ENCODE measurements at regions of chr5 and their contacts with region 1.

Region 1: GRCh38 chr5:151051066-151051930 is 29.5 kb downstream of the TNIP1 start:
- DNase-seq: peak; percentile 43
- H3K4me3 ChIP-seq: no peak overlapping the region
- H3K27ac ChIP-seq: no peak overlapping the region
- H3K27me3 ChIP-seq: no peaks in the 10 kb centered on the region
- CTCF ChIP-seq: peak; percentile 95

Region 2: DNA sequence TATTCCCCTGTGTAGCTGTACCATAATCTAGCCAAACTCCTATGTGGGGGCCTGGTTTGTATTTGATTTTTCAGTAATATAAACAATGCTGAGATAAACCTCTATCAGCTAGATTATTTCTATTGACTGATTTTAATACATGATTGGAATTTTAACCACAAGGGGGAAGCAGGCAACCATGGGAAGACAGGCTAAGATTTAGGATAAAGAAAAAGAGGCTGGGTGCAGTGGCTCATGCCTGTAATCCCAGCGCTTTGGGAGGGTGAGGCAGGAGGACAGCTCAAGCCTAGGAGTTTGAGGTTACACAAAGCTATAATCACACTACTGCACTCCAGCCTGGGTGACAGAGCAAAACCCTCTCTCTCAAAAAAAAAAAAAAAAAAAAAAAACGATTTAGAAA is 49.0 kb before region 1 on chr5:
- CTCF ChIA-PET with region 1: interaction called, 122 read pairs
- POLR2A ChIA-PET with region 1: no interaction called
- DNase-seq: no peak
- H3K4me3 ChIP-seq: no peak overlapping the region
- H3K27ac ChIP-seq: no peak overlapping the region
- H3K27me3 ChIP-seq: peaks cover 9% of the 10 kb centered on the region
- CTCF ChIP-seq: peak; percentile 59

Region 3: DNA sequence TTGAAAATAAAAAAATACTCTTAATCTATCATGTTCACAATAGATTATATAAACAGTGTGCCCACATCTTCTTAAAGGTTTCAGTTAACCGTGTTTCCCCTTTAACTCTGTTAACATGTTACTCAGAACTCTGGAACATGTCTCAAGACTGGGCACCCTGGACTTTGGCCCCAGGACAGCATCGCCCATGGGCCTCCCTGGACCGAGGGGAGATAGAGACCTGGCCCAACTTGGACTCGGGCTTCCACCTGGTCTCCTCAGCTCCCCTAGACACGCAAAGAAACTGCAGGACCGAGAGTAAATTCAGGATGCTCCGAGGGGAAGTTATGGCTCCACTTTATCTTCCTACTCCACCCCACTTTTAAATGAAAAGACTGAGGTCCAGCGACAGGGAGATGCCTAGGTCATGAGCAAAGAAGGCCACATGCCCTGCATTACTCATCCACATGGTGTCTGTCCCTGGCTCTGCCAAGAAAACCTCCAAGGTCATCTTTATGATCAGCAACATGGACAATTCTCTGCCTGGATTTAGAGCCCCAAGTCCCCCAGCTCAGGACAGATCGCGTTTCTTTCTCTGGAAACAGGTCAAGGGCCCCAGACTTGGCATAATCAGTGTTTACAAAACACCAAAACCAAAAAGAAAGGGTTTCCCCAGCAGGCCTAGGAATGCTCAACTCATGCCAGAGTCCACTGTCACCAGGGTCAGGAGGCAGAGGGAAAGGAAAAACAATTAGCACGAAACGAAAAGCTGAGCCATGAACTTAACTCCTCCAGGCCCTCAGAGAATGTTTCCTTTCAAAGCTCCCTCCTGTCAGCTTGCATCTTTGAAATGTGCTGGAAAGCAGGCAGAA is 13.5 kb before region 1 on chr5:
- CTCF ChIA-PET with region 1: interaction called, 71 read pairs
- POLR2A ChIA-PET with region 1: no interaction called
- DNase-seq: peak; percentile 26
- H3K4me3 ChIP-seq: no peak overlapping the region
- H3K27ac ChIP-seq: peak overlapping the region; percentile 67
- H3K27me3 ChIP-seq: no peaks in the 10 kb centered on the region
- CTCF ChIP-seq: no peak

Region 4: GRCh38 chr5:151080623-151081430 is 29.5 kb after region 1 on chr5 and contains the start of gene TNIP1:
- CTCF ChIA-PET with region 1: interaction called, 19 read pairs
- POLR2A ChIA-PET with region 1: no interaction called
- DNase-seq: no peak
- H3K4me3 ChIP-seq: peak within 1 kb of the TSS; percentile 82
- H3K27ac ChIP-seq: peak within 1 kb of the TSS; percentile 90
- H3K27me3 ChIP-seq: no peaks in the 10 kb centered on the region
- CTCF ChIP-seq: no peak
- polyA plus RNA-seq, gene TNIP1: 42.6 and 49.2 TPM in 2 replicates

Region 5: GRCh38 chr5:151107738-151108508 is 56.6 kb after region 1 on chr5:
- CTCF ChIA-PET with region 1: interaction called, 526 read pairs
- POLR2A ChIA-PET with region 1: no interaction called
- DNase-seq: no peak
- H3K4me3 ChIP-seq: no peak overlapping the region
- H3K27ac ChIP-seq: no peak overlapping the region
- H3K27me3 ChIP-seq: no peaks in the 10 kb centered on the region
- CTCF ChIP-seq: no peak

Region 6: DNA sequence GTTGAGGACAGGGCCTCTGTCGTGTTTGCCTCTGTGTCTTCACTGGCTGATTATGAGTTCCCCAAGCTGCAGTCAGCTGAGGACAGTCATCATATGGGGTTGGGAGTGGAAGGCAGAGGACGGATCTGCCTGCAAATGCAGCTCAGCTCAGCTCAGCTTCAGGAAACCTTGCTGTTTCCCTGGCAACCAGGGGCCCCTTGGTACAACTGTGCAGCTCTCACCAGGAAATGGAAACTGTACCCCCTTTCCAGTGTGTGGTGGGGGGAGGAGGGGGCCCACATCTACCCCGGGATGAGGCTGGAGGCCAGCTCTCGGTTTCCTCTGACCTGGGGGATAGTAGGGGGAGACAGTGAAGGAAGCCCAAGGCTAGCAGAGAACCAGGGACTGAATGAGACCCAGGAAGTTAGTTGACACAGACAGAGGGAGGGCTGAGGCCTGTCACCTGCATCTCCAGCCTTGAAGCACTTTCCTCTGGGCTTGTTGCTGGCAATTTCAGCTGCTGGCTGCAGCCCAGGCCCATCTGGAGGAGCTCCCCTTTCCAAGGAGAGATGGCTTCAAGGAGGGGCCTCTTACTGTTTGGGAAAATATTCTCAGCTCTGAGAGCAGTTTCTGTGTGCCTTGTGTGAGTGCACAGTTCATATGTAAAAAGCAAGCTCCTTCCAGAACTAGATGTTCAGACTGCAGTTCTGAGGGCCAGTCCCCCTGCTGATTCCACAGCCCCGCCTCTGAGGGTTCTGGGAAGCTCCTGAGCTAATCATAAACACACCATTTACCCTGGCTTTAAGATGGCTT is 99.4 kb after region 1 on chr5:
- CTCF ChIA-PET with region 1: interaction called, 16 read pairs
- POLR2A ChIA-PET with region 1: no interaction called
- DNase-seq: no peak
- H3K4me3 ChIP-seq: no peak overlapping the region
- H3K27ac ChIP-seq: peak overlapping the region; percentile 73
- H3K27me3 ChIP-seq: no peaks in the 10 kb centered on the region
- CTCF ChIP-seq: no peak

Region 7: GRCh38 chr5:151164686-151165392 is 113.5 kb after region 1 on chr5:
- CTCF ChIA-PET with region 1: interaction called, 143 read pairs
- POLR2A ChIA-PET with region 1: no interaction called
- DNase-seq: peak; percentile 56
- H3K4me3 ChIP-seq: no peak overlapping the region
- H3K27ac ChIP-seq: no peak overlapping the region
- H3K27me3 ChIP-seq: peaks cover 2% of the 10 kb centered on the region
- CTCF ChIP-seq: peak; percentile 93

Region 8: GRCh38 chr5:151288180-151288579 is 236.9 kb after region 1 on chr5:
- CTCF ChIA-PET with region 1: no interaction called
- POLR2A ChIA-PET with region 1: no interaction called
- DNase-seq: no peak
- H3K4me3 ChIP-seq: no peak overlapping the region
- H3K27ac ChIP-seq: no peak overlapping the region
- H3K27me3 ChIP-seq: no peaks in the 10 kb centered on the region
- CTCF ChIP-seq: no peak